ENCODE measurements at regions of chr17 and their contacts with region 1.

Region 1: DNA sequence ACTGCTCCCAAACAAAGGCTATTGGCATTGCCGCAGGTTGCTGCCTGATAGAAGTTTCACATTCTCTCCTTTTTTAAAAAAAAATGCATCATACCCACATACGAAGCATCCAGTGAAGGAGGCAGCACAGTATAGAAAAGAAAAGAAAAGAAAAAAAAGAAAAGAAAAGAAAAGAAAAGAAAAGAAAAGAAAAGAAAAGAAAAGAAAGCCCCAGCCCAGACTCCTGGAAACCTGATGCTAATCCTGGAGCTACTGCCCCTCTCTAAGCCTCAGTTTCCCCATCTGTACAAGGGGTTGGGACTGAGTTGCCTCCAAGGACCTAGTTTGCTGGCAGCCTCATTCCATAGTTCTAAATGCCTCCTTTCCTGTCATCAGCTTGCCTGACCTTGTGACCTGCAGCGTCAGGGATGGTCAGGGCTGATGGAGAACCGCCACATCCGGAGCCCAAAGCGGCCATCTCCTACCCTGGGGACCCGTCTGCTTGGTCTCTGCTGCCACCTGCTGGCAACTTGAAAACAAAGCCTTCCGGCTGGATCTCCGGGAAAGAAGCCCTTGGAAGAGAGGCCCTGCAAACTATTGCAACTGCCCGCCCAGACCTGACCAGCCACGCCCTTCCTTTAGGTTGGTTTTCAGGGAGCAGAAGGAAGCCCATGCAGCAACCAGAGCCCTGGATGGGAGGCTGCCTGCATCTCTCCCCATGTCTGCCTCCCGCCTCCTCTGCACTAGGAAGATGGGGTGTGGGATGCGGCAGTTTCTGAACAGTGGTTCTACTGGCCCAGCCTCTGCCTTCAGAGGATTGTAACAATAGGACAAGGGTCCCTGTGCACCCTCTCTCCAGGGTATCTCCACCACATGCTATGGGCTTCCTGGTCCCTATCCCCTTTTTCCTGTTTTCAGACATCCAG is 13.0 kb downstream of the AIPL1 start:
- DNase-seq: peak; percentile 57
- H3K4me3 Mint-ChIP-seq: no peak overlapping the region
- H3K27ac Mint-ChIP-seq: no peak overlapping the region
- H3K4me1 Mint-ChIP-seq: peaks cover 6% of the 10 kb centered on the region
- H3K27me3 Mint-ChIP-seq: peaks cover 51% of the 10 kb centered on the region

Region 2: GRCh38 chr17:5584383-5585286 is 837.3 kb before region 1 on chr17 and contains the start of gene NLRP1:
- intact Hi-C with region 1: loop called (anchors 1 kb)
- DNase-seq: peak; percentile 92
- H3K4me3 Mint-ChIP-seq: peak within 1 kb of the TSS; percentile 89
- H3K27ac Mint-ChIP-seq: peak within 1 kb of the TSS; percentile 93
- H3K4me1 Mint-ChIP-seq: peaks cover 55% of the 10 kb centered on the region
- H3K27me3 Mint-ChIP-seq: peaks cover 6% of the 10 kb centered on the region
- total RNA-seq, gene NLRP1: 26.3 and 26.9 TPM in 2 replicates

Region 3: DNA sequence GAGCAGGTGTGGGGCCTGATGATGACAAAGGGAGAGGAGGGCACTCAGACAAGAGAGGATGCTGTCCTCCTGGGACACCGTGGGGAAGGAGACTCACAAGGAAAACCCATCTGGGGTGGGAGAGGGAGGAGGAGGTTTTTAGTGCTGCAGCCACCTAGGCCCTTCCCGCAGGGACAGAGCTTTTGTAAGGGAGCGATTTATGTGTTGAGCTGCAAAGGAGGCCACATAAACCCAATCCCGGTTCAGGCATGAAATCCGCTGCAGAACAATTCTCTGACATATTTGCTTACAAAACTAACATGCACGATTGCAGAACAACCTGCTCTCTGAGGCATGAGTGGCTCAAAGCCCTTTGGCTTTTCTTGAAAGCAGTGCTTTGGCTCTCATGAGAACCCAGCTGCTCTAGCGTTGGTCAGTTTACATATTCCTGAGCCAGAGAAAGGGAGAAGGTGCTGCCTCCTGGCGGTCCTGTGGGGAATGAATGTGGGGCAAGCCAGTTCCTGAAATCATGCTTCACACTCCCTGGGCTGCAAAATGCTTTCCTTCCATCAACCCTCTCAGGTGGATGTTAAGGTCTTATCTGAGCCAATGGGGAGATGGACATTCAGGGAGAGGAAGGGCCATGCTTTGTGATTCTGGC is 715.3 kb before region 1 on chr17:
- intact Hi-C with region 1: loop called (anchors 10 kb)
- DNase-seq: peak; percentile 16
- H3K4me3 Mint-ChIP-seq: no peak overlapping the region
- H3K27ac Mint-ChIP-seq: no peak overlapping the region
- H3K4me1 Mint-ChIP-seq: no peaks in the 10 kb centered on the region
- H3K27me3 Mint-ChIP-seq: peaks cover 9% of the 10 kb centered on the region

Region 4: GRCh38 chr17:6231886-6232731 is 189.8 kb before region 1 on chr17:
- intact Hi-C with region 1: no loop called
- DNase-seq: no peak
- H3K4me3 Mint-ChIP-seq: no peak overlapping the region
- H3K27ac Mint-ChIP-seq: no peak overlapping the region
- H3K4me1 Mint-ChIP-seq: no peaks in the 10 kb centered on the region
- H3K27me3 Mint-ChIP-seq: no peaks in the 10 kb centered on the region

Region 5: GRCh38 chr17:6279659-6280058 is 142.3 kb before region 1 on chr17:
- intact Hi-C with region 1: loop called (anchors 10 kb)
- DNase-seq: no peak
- H3K4me3 Mint-ChIP-seq: no peak overlapping the region
- H3K27ac Mint-ChIP-seq: no peak overlapping the region
- H3K4me1 Mint-ChIP-seq: no peaks in the 10 kb centered on the region
- H3K27me3 Mint-ChIP-seq: peaks cover 2% of the 10 kb centered on the region

Region 6: GRCh38 chr17:6374761-6375312 is 47.1 kb before region 1 on chr17:
- intact Hi-C with region 1: loop called (anchors 10 kb)
- DNase-seq: no peak
- H3K4me3 Mint-ChIP-seq: peak overlapping the region; percentile 3
- H3K27ac Mint-ChIP-seq: peak overlapping the region; percentile 30
- H3K4me1 Mint-ChIP-seq: peaks cover 22% of the 10 kb centered on the region
- H3K27me3 Mint-ChIP-seq: peaks cover 13% of the 10 kb centered on the region

Region 7: DNA sequence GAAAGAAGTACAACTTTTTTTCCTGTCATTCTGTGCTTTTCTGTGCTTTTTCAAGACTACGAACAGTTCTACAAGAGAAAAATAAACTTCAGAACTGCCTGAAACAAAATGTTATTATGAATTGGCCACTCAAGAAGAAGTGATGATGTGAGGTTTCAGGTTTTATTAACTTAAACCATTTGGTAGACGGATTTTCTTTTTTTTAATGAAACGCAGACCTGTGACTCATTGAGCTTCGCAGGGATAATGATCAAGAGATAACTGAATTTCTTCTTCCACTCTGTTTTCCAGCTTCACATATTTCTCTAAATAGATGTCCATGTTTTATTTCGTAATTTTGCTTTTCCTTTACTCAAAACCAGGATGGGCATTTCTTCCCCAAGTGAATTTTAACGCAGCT is 19.7 kb before region 1 on chr17:
- intact Hi-C with region 1: no loop called
- DNase-seq: no peak
- H3K4me3 Mint-ChIP-seq: no peak overlapping the region
- H3K27ac Mint-ChIP-seq: no peak overlapping the region
- H3K4me1 Mint-ChIP-seq: no peaks in the 10 kb centered on the region
- H3K27me3 Mint-ChIP-seq: peaks cover 9% of the 10 kb centered on the region

Measured in activated T-helper 2 cell treated with anti-CD3 and anti-CD28 coated beads, Interferon-gamma antibody, Interleukin-2, Interleukin-4, amounts not matched to agents 10 μg/mL and 5 μg/mL and 100 μg/mL, durations not matched to agents 14 hours and 24 hours and 36 hours (primary cell).